H1 (cell line): ENCODE measurements at regions of chr12 and their contacts with region 1.

Region 1: GRCh38 chr12:106841510-106842302 is 67.2 kb downstream of the RIC8B start:
- DNase-seq: no peak
- H3K4me3 ChIP-seq: no peak overlapping the region
- H3K27ac ChIP-seq: no peak overlapping the region
- H3K4me1 ChIP-seq: peaks cover 2 to 8% (median 4%) of the 10 kb centered on the region in 4 experiments; a peak in 4 of 7 replicates
- H3K27me3 ChIP-seq: no peaks in the 10 kb centered on the region
- CTCF ChIP-seq: peak in 2 of 3 experiments; percentile 40 to 50; a peak in 2 of 4 replicates
- EP300 ChIP-seq: no peak
- POLR2A ChIP-seq: no peak
- RAD21 ChIP-seq: peak; percentile 67 to 74

Region 2: DNA sequence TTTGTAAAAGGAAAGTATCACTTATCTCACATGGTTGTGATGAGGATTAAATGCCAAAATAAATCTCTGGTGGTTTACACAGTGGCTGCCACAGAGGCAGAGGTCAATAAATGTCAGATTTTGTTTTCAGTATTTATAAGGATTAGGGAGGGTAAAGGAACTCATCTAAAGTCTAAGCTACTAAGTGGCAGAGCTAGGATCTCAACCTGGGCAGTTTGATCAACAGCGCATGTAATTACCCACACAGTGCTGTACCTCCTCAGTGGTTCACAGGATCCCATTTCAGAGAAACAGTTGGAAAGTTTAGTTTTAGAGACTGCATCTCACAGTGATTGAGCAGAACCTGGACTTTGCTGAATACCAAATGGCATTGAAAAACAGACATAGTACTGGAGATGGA is 112.1 kb before region 1 on chr12:
- CTCF ChIA-PET with region 1: interaction called, 11 read pairs
- POLR2A ChIA-PET with region 1: no interaction called
- DNase-seq: no peak
- H3K4me3 ChIP-seq: no peak overlapping the region
- H3K27ac ChIP-seq: no peak overlapping the region
- H3K4me1 ChIP-seq: no peaks in the 10 kb centered on the region
- H3K27me3 ChIP-seq: no peaks in the 10 kb centered on the region
- CTCF ChIP-seq: no peak
- EP300 ChIP-seq: no peak
- POLR2A ChIP-seq: no peak
- RAD21 ChIP-seq: no peak